AG04449 (cell line): ENCODE measurements at regions of chr15 and their contacts with region 1.

Region 1: DNA sequence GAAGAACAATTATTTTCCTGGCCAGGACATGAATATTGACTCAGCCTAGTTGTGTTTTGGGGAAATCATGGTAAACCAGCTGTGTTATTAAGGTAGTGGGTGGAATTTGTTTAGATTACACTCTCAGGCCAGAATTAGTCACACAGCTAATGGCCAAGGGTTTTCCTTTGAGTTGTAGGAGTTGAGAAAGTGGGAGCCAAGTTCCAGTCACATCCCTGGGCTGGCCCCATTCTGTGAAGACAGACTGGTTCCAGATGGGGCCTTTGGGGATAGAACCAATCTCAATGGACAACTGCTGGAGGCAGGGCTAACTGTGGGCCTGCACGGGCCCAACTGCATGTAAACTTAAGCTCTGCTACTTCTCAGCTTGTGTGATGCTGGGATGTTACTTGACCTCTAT is 1.4 kb upstream of the RASL12 start:
- DNase-seq: peak; percentile 47
- H3K4me3 ChIP-seq: no peak overlapping the region
- CTCF ChIP-seq: no peak

Region 2: DNA sequence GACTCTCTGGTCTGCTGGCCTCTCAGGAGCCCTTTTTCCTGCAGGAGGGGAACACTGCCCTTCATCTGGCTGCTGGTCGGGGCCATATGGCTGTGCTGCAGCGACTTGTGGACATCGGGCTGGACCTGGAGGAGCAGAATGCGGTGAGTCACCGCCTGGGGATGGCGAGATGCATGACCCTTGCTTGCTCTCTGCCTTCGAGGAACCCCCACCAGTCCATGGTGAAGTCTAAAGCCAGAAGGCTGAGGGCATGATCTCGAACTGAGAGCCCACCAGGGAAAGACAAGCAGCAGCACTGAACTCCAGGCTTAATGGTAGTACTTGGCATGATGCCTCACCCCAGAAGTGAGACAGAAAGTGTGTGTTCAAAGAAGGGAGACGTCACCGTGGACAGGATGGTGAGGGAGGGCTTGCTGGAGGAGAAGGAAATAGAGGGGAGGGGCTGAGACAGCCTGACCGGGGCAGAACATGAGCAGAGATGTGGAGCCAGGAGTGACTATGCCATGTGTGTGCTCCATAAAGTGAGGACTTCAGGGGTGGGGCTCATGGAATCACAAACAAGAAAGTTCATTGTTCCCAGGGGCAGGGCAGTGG is 138.3 kb before region 1 on chr15:
- CTCF ChIA-PET with region 1: no interaction called
- POLR2A ChIA-PET with region 1: no interaction called
- DNase-seq: no peak
- H3K4me3 ChIP-seq: no peak overlapping the region
- CTCF ChIP-seq: no peak

Region 3: DNA sequence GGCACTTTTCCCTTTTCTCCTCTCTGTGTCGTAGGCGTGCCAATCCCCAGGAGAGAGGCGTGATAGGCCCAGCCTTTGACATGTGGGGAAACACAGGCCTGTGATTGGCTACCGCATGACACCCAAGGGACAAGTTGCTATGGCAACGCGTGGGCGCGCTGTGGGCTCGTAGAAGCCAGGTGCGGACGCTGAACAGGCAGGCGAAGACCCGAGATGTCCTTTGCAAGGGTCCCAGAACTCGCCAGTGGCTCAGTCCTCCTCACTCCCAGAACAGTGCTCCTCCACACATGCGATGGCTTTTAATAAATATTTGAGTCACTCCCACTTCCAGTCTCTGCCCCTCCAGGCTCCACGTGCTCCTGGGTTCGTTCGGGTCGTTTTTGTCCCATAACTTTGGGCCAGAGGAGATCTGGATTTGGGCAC is 19.8 kb before region 1 on chr15:
- CTCF ChIA-PET with region 1: interaction called, 135 read pairs
- POLR2A ChIA-PET with region 1: no interaction called
- DNase-seq: peak; percentile 50
- H3K4me3 ChIP-seq: peak overlapping the region; percentile 47
- CTCF ChIP-seq: no peak

Region 4: GRCh38 chr15:65086017-65086679 is 17.0 kb after region 1 on chr15:
- CTCF ChIA-PET with region 1: interaction called, 109 read pairs
- POLR2A ChIA-PET with region 1: no interaction called
- DNase-seq: no peak
- H3K4me3 ChIP-seq: no peak overlapping the region
- CTCF ChIP-seq: peak; percentile 55